Cardiac septum (tissue), 1 donor: ENCODE measurements at regions of chr5 and their contacts with region 1.

Region 1: DNA sequence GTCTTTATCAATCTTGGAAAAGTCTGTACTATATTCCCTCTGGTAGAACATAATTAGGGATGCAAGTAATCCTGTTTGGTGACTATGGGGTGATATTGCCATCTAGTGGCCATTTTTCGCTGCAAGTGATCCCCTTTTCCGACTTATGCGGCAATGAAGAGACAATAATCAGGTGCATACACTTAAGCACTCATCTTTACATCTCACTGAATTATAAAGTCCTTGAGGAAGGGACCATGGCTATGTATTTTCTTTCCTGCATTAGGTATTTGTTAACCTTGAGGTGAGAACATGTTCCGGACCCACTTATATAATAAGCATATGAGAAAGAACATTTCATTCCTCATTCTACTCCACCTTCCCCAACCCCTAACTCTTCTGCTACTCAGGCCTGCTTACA is 19.6 kb upstream of the LIX1 start:
- DNase-seq: no peak

Region 2: GRCh38 chr5:95508550-95508949 is 1653.5 kb before region 1 on chr5:
- intact Hi-C with region 1: no loop called
- DNase-seq: no peak

Region 3: DNA sequence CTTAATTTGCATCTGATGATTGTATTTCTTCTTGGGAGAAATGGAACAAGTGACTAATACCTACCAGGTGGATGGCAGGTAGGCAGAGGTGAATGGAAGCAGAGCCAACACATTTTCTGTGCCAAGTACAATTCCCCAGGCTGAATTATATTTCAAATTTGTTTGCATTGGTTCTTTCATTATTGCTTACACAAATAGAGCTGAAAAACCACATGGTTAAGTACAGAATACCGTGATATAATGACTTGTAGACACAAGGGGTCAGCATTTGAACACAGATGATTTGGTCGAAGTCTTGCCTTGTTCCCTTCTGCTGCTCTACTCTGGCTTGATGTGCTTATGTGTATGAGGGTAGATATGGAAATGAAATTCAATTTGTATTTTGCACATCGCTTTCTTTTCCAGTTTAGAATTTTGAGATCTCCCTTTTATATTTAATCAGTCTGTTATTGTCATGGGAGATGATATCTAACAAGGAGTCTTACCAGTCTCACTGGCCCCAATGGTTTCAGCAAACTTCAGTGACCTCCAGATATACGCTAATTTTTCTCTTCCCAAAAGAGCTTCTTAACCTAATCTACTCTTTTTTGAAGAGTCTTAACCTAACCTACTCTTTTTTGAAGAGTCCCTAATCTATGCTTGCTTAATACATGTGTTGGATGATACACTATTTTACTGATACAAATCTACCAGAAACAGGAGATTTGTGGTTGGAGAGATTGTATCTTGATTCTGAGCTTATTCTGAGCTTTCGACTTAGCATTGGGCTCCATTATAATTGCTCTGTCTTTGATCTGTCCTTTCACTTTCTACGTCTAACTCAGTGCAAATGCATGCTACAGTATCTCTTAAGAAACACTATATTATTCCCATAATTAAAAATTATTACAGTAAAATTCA is 817.1 kb before region 1 on chr5:
- intact Hi-C with region 1: loop called (anchors 10 kb)
- DNase-seq: no peak

Region 4: GRCh38 chr5:96614110-96614691 is 547.8 kb before region 1 on chr5:
- intact Hi-C with region 1: loop called (anchors 2 kb)
- DNase-seq: no peak

Region 5: GRCh38 chr5:96752341-96753016 is 409.6 kb before region 1 on chr5:
- intact Hi-C with region 1: loop called (anchors 5 kb)
- DNase-seq: no peak

Region 6: GRCh38 chr5:96868603-96869371 is 293.3 kb before region 1 on chr5:
- intact Hi-C with region 1: loop called (anchors 5 kb)
- DNase-seq: no peak

Region 7: GRCh38 chr5:96997265-96997859 is 164.7 kb before region 1 on chr5:
- intact Hi-C with region 1: loop called (anchors 2 kb)
- DNase-seq: no peak

Region 8: GRCh38 chr5:97044052-97044451 is 118.0 kb before region 1 on chr5:
- intact Hi-C with region 1: loop called (anchors 5 kb)
- DNase-seq: no peak

Region 9: DNA sequence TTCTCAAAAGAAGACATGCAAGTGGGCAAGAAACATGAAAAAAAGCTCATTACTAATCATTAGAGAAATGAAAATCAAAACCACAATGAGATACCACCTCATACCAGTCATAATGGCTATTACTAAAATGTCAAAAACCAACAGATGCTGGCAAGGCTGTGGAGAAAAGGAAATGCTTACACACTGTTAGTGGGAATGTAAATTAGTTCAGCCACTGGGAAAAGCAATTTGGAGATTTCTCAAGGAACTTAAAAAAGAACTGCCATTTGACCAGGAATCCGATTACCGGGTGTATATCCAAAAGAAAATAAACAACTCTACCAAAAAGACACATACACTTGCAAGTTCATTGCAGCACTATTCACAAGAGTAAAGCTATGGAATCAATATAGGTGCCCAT is 616.4 kb after region 1 on chr5:
- intact Hi-C with region 1: no loop called
- DNase-seq: no peak